B cell (primary cell): ENCODE measurements at regions of chr1 and their contacts with region 1.

Region 1: DNA sequence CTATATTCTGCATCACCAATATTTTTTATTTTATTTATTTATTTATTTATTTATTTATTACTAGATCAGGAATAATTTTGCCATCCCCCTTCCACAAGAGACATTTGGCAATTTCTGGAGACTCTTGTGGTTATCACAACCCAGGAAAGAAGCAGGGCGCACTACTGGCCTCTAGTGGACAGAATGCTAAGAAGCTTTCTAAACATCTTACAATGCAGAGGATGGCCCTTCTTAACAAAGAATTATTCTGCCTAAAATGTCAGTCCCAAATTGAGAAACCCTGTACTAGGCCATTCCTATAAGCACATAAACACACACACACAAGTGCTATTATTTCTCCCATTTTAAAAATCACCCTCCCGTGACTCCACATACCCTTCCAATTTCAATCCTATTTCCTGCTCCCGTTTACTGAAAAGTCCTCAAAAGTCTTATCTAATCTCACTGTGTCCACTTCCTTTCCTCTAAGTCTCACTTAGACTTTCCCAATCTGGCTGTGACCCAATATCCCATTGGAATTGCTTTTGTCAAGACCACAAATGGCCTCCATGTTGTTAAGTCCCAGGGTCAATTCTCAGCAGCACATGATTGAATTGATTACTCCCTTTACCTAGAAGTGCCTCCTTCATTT is 43.7 kb upstream of the RNF11 start:
- DNase-seq: peak; percentile 63
- ATAC-seq: no peak
- H3K4me3 ChIP-seq: no peak overlapping the region
- H3K4me3 Mint-ChIP-seq: no peak overlapping the region
- H3K27ac ChIP-seq: no peak overlapping the region
- H3K27ac Mint-ChIP-seq: no peak overlapping the region
- H3K4me1 ChIP-seq: no peaks in the 10 kb centered on the region
- H3K4me1 Mint-ChIP-seq: no peaks in the 10 kb centered on the region
- H3K27me3 ChIP-seq: no peaks in the 10 kb centered on the region
- H3K27me3 Mint-ChIP-seq: peaks cover 9% of the 10 kb centered on the region
- CTCF ChIP-seq: peak; percentile 88

Region 2: DNA sequence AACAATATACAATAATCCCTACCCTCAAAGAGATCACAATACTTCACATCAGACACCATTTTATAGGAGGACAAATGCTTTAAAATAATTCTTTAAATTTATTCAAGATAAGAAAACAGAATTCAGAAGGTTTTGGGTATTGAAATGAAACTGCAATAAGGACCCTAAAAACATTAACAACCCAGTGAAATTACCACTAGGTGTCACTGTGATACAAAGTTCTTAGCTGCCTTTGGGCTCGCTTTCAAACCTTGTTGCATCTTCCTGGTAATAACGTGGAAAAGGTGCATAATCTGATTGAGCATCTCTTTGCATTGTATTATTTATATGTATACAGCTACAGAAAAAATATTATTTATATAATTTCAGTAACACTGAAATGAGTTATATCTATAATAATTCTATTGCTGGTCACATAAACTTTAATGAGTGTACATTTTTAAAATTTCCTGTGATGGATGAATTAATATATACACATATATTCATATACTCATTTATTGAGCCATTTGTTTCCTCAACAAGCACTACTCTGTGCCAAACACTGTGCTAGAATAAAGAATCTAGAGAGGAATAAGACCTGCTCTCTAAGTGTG is 417.5 kb before region 1 on chr1:
- CTCF ChIA-PET with region 1: interaction called, 225 read pairs
- POLR2A ChIA-PET with region 1: no interaction called
- intact Hi-C with region 1: loop called (anchors 1 kb)
- DNase-seq: peak; percentile 61
- ATAC-seq: no peak
- H3K4me3 ChIP-seq: no peak overlapping the region
- H3K4me3 Mint-ChIP-seq: no peak overlapping the region
- H3K27ac ChIP-seq: no peak overlapping the region
- H3K27ac Mint-ChIP-seq: no peak overlapping the region
- H3K4me1 ChIP-seq: peaks cover 3% of the 10 kb centered on the region in 2 donors
- H3K4me1 Mint-ChIP-seq: peaks cover 5% of the 10 kb centered on the region
- H3K27me3 ChIP-seq: no peaks in the 10 kb centered on the region
- H3K27me3 Mint-ChIP-seq: no peaks in the 10 kb centered on the region
- CTCF ChIP-seq: peak; percentile 91

Region 3: GRCh38 chr1:50873458-50874187 is 318.7 kb before region 1 on chr1:
- CTCF ChIA-PET with region 1: interaction called, 146 read pairs
- POLR2A ChIA-PET with region 1: no interaction called
- intact Hi-C with region 1: loop called (anchors 1 kb)
- DNase-seq: peak; percentile 86
- ATAC-seq: peak; percentile 88
- H3K4me3 ChIP-seq: peak overlapping the region in 2 of 5 experiments; percentile 30 to 41
- H3K4me3 Mint-ChIP-seq: peak overlapping the region; percentile 81
- H3K27ac ChIP-seq: no peak overlapping the region
- H3K27ac Mint-ChIP-seq: peak overlapping the region; percentile 68
- H3K4me1 ChIP-seq: peaks cover 0 to 3% of the 10 kb centered on the region in 2 donors
- H3K4me1 Mint-ChIP-seq: peaks cover 11% of the 10 kb centered on the region
- H3K27me3 ChIP-seq: no peaks in the 10 kb centered on the region
- H3K27me3 Mint-ChIP-seq: no peaks in the 10 kb centered on the region
- CTCF ChIP-seq: peak; percentile 91

Region 4: DNA sequence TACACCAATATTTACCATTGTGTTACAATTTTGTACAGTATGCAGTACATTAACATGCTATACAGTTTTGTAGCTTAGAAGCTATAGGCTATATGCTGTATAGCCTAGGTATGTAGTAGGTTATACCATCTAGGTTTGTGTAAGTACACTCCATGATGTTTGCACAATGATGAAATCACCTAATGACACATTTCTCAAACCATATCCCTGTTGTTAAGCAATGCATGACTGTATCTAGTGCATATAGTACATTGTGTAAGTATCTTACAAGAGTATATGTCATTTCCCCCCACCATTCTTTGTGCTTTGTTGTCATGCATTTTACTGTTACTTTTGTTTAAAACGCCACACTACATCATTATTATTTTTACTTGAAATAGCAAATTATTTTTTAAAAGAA is 22.0 kb before region 1 on chr1:
- CTCF ChIA-PET with region 1: interaction called, 62 read pairs
- POLR2A ChIA-PET with region 1: no interaction called
- intact Hi-C with region 1: no loop called
- DNase-seq: no peak
- ATAC-seq: no peak
- H3K4me3 ChIP-seq: no peak overlapping the region
- H3K4me3 Mint-ChIP-seq: no peak overlapping the region
- H3K27ac ChIP-seq: no peak overlapping the region
- H3K27ac Mint-ChIP-seq: no peak overlapping the region
- H3K4me1 ChIP-seq: peaks cover 0 to 4% of the 10 kb centered on the region in 2 donors
- H3K4me1 Mint-ChIP-seq: peaks cover 2% of the 10 kb centered on the region
- H3K27me3 ChIP-seq: peaks cover 0 to 5% (median 2%) of the 10 kb centered on the region in 4 experiments
- H3K27me3 Mint-ChIP-seq: peaks cover 21% of the 10 kb centered on the region
- CTCF ChIP-seq: no peak

Region 5: DNA sequence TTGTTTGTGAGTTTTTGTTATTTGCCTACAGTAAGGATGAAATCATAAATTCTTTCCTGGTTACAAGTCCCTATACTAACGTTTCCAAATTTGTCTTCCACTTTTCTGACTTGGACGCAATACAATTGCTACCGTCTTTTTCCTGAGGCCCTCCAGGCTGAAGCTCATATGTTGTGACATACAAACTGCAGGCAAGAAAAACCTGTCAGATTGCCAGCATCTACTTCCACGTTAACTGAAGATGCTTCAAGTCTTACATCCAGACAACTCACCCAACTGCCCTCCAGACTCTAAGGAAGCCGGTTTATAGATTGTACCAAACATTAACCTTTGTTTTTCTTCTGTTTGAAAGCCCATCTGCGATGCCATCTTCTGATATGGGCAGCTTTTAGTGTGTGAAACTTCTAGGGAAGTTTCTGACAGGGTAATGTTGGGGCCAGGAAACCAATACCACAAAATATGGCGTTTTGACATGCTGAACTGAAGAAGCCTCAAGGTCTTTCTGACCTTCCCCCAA is 22.3 kb after region 1 on chr1:
- CTCF ChIA-PET with region 1: interaction called, 12 read pairs
- POLR2A ChIA-PET with region 1: no interaction called
- intact Hi-C with region 1: no loop called
- DNase-seq: no peak
- ATAC-seq: no peak
- H3K4me3 ChIP-seq: no peak overlapping the region
- H3K4me3 Mint-ChIP-seq: no peak overlapping the region
- H3K27ac ChIP-seq: no peak overlapping the region
- H3K27ac Mint-ChIP-seq: no peak overlapping the region
- H3K4me1 ChIP-seq: peaks cover 0 to 4% of the 10 kb centered on the region in 2 donors
- H3K4me1 Mint-ChIP-seq: peaks cover 10% of the 10 kb centered on the region
- H3K27me3 ChIP-seq: no peaks in the 10 kb centered on the region
- H3K27me3 Mint-ChIP-seq: no peaks in the 10 kb centered on the region
- CTCF ChIP-seq: no peak

Region 6: GRCh38 chr1:51235673-51236530 is 43.6 kb after region 1 on chr1 and contains the start of gene RNF11:
- CTCF ChIA-PET with region 1: interaction called, 4 read pairs
- POLR2A ChIA-PET with region 1: no interaction called
- intact Hi-C with region 1: loop called (anchors 1 kb)
- DNase-seq: peak; percentile 95
- ATAC-seq: peak; percentile 73
- H3K4me3 ChIP-seq: peak within 1 kb of the TSS; percentile 69 to 96 (median 86)
- H3K4me3 Mint-ChIP-seq: peak within 1 kb of the TSS; percentile 94
- H3K27ac ChIP-seq: peak within 1 kb of the TSS; percentile 58 to 80
- H3K27ac Mint-ChIP-seq: peak within 1 kb of the TSS; percentile 94
- H3K4me1 ChIP-seq: peaks cover 29 to 39% of the 10 kb centered on the region in 2 donors
- H3K4me1 Mint-ChIP-seq: peaks cover 34% of the 10 kb centered on the region
- H3K27me3 ChIP-seq: peaks cover 0 to 6% (median 1%) of the 10 kb centered on the region in 4 experiments
- H3K27me3 Mint-ChIP-seq: peaks cover 8% of the 10 kb centered on the region
- CTCF ChIP-seq: no peak
- total RNA-seq, gene RNF11: 17.6 and 20.6 TPM in 2 replicates

Region 7: DNA sequence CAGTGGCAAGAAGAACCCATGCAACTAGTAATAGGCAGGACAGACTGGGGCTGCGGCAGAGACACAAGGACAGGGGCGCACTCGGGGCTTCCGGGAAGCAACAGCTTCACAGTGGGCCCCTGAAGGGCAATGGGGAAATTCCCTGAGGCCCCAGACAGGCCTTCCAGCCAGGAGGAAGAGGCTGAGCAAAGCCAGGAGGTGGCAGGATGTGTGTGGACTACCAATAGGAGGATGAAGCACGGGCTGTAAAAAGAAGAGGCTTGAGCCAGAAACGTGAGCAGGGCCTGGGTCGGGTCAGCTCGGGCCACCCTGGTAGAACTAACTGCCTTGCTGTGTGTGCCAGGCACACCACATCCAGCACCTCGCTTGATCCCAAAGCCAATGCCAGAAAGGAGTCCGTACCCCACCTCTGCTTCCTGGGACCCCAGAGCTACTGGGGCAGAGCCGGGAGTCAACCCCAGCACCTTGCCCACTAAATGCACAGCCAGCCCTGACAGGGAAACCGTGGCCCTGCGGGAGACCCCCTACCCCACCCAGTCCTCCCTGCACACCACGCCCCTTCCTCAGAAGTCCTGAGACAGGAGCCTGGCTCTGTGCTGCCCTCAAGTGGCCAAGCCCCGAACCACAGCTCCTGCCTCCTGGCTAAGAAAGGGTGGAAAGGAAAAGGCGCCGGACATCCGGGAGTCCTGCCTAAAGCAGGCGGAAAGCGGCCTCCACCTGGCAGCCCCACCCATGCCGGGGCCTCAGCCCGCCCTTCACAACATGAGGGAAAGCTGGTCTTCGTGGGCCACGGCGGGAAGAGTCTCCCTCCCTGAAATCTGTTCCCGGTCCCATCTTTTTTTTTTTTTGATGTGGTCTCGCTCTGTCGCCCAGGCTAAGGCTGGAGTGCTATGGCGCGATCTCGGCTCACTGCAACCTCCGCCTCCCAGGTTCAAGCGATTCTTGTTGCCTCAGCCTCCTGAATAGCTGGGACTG is 104.3 kb after region 1 on chr1:
- CTCF ChIA-PET with region 1: interaction called, 61 read pairs
- POLR2A ChIA-PET with region 1: no interaction called
- intact Hi-C with region 1: loop called (anchors 2 kb)
- DNase-seq: peak; percentile 70
- ATAC-seq: peak; percentile 76
- H3K4me3 ChIP-seq: peak overlapping the region in 4 of 5 experiments; percentile 27 to 60 (median 46)
- H3K4me3 Mint-ChIP-seq: peak overlapping the region; percentile 60
- H3K27ac ChIP-seq: no peak overlapping the region
- H3K27ac Mint-ChIP-seq: no peak overlapping the region
- H3K4me1 ChIP-seq: peaks cover 6 to 12% of the 10 kb centered on the region in 2 donors
- H3K4me1 Mint-ChIP-seq: peaks cover 10% of the 10 kb centered on the region
- H3K27me3 ChIP-seq: peaks cover 0 to 9% (median 0%) of the 10 kb centered on the region in 4 experiments
- H3K27me3 Mint-ChIP-seq: peaks cover 10% of the 10 kb centered on the region
- CTCF ChIP-seq: peak; percentile 96